BJ (cell line): ENCODE measurements at regions of chr16 and their contacts with region 1.

Region 1: DNA sequence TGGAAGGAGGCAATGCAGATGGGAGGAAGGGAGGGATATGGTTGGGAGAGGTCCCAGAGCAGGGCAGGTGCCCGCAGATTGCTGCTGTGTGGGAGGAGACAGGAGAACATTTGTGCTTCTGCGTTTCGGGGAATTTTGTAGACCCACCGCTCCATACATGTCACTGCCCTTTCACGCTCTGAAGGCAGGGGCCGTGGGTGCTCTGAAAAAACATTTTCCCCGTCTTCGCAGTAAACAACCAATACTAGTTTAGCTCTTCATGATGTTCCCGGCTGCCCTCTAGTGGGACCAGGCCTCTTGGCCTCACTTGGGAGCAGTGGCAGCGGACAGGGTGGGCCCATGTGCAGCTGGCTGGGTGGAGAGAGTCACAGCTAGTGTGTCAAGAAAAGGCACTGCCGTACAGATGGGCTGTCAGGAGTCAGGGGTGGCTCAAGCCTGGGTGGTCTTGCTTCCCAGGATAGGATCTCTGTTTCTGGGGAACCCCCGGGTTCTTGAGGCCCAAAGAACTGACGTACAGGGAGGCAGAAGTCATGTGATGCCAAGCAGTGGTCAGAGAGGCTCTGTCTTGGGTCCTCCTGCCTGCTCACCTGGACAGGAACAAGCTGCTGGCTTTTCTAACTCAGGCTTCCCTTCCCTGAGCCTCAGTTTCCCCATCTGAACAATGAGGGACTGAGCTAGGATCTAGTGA is 46.5 kb upstream of the CPNE2 start:
- DNase-seq: no peak
- H3K4me3 ChIP-seq: no peak overlapping the region
- H3K27me3 ChIP-seq: no peaks in the 10 kb centered on the region
- CTCF ChIP-seq: peak; percentile 83

Region 2: GRCh38 chr16:55912022-55912421 is 1133.8 kb before region 1 on chr16:
- CTCF ChIA-PET with region 1: no interaction called
- POLR2A ChIA-PET with region 1: no interaction called
- DNase-seq: no peak
- H3K4me3 ChIP-seq: no peak overlapping the region
- H3K27me3 ChIP-seq: no peaks in the 10 kb centered on the region
- CTCF ChIP-seq: no peak

Region 3: DNA sequence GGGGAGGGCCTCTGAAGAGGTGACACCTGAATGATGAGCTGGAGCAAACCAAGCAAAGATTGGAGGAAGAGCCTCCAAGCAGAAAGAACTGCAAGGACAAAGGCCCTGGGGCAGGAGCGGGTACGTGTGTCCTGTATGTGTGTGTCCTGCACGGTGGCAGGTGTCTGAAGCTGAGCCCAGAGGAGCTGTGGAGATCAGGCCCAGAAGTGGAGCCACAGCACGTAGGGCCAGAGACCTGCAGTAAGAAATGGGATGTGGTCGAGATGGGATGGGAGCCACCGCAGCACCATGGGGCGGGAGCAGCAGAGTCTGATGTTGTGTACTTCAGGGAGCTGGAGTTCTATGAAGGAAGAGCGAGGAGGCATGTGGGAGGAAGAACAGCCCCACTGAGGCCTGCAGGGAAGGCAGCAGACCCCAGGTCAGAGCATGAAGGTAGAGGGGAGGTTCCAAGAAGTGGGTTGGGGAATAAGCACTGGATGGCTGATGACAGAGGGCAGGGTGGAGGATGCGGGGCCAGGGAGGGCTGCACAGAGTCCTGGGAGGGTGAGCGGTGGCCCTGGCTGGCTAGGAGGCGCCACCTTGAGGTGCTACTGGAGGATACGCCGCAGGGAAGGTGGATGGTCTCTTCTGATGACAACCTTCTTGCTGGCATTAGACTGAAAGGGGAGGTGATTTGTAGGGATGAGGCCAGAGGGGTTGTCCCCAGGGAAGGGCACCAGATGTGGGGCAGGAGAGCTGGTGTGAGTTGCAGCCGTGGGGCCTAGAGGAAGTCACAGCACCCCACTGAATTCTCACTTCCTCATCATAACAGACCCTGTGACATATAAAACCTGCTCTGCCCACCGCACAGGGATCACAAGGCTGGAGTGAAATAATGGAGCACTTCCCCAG is 94.7 kb before region 1 on chr16:
- CTCF ChIA-PET with region 1: interaction called, 10 read pairs
- POLR2A ChIA-PET with region 1: no interaction called
- DNase-seq: no peak
- H3K4me3 ChIP-seq: no peak overlapping the region
- H3K27me3 ChIP-seq: no peaks in the 10 kb centered on the region
- CTCF ChIP-seq: peak; percentile 86

Region 4: GRCh38 chr16:56964243-56965148 is 81.3 kb before region 1 on chr16:
- CTCF ChIA-PET with region 1: interaction called, 19 read pairs
- POLR2A ChIA-PET with region 1: no interaction called
- DNase-seq: peak; percentile 53
- H3K4me3 ChIP-seq: no peak overlapping the region
- H3K27me3 ChIP-seq: no peaks in the 10 kb centered on the region
- CTCF ChIP-seq: peak; percentile 65

Region 5: GRCh38 chr16:57061084-57061905 is 15.5 kb after region 1 on chr16:
- CTCF ChIA-PET with region 1: interaction called, 14 read pairs
- POLR2A ChIA-PET with region 1: no interaction called
- DNase-seq: peak; percentile 53
- H3K4me3 ChIP-seq: no peak overlapping the region
- H3K27me3 ChIP-seq: no peaks in the 10 kb centered on the region
- CTCF ChIP-seq: no peak